ENCODE measurements at regions of chr5 and their contacts with region 1.

Region 1: GRCh38 chr5:172714491-172715421 is 56.2 kb downstream of the DUSP1 start:
- DNase-seq: peak; percentile 99
- H3K4me3 Mint-ChIP-seq: no peak overlapping the region
- H3K27ac Mint-ChIP-seq: peak overlapping the region; percentile 80
- H3K4me1 Mint-ChIP-seq: peaks cover 40% of the 10 kb centered on the region
- H3K27me3 Mint-ChIP-seq: no peaks in the 10 kb centered on the region
- CTCF ChIP-seq: peak; percentile 97

Region 2: GRCh38 chr5:172274921-172275753 is 439.6 kb before region 1 on chr5:
- CTCF ChIA-PET with region 1: no interaction called
- POLR2A ChIA-PET with region 1: no interaction called
- intact Hi-C with region 1: no loop called
- DNase-seq: peak; percentile 74
- H3K4me3 Mint-ChIP-seq: peak overlapping the region; percentile 0
- H3K27ac Mint-ChIP-seq: peak overlapping the region; percentile 58
- H3K4me1 Mint-ChIP-seq: peaks cover 26% of the 10 kb centered on the region
- H3K27me3 Mint-ChIP-seq: no peaks in the 10 kb centered on the region
- CTCF ChIP-seq: no peak

Region 3: DNA sequence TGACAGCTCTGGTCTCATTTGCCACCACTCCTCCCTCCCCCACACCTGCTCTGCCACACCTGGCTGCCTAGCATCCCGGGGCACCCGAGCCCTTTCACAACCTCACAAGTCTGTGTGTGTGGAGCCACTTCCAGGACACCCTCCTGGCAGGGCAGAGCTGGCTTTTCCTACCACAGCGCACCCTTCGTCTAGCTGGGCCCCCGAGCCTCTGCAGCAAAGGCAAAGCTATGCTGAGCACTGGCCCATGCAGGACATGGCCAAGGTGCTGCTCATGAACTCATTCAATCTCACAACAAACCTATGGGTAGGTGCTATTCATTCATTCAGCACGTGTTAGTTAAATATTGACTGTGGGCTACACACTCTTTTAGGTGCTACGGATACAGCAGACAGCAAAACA is 12.8 kb after region 1 on chr5:
- CTCF ChIA-PET with region 1: interaction called, 51 read pairs
- POLR2A ChIA-PET with region 1: interaction called, 17 read pairs
- intact Hi-C with region 1: no loop called
- DNase-seq: no peak
- H3K4me3 Mint-ChIP-seq: no peak overlapping the region
- H3K27ac Mint-ChIP-seq: peak overlapping the region; percentile 61
- H3K4me1 Mint-ChIP-seq: peaks cover 19% of the 10 kb centered on the region
- H3K27me3 Mint-ChIP-seq: no peaks in the 10 kb centered on the region
- CTCF ChIP-seq: no peak

Region 4: GRCh38 chr5:172777881-172778814 is 63.4 kb after region 1 on chr5:
- CTCF ChIA-PET with region 1: interaction called, 66 read pairs
- POLR2A ChIA-PET with region 1: interaction called, 53 read pairs
- intact Hi-C with region 1: no loop called
- DNase-seq: peak; percentile 97
- H3K4me3 Mint-ChIP-seq: peak overlapping the region; percentile 69
- H3K27ac Mint-ChIP-seq: peak overlapping the region; percentile 99
- H3K4me1 Mint-ChIP-seq: peaks cover 70% of the 10 kb centered on the region
- H3K27me3 Mint-ChIP-seq: no peaks in the 10 kb centered on the region
- CTCF ChIP-seq: no peak

Region 5: DNA sequence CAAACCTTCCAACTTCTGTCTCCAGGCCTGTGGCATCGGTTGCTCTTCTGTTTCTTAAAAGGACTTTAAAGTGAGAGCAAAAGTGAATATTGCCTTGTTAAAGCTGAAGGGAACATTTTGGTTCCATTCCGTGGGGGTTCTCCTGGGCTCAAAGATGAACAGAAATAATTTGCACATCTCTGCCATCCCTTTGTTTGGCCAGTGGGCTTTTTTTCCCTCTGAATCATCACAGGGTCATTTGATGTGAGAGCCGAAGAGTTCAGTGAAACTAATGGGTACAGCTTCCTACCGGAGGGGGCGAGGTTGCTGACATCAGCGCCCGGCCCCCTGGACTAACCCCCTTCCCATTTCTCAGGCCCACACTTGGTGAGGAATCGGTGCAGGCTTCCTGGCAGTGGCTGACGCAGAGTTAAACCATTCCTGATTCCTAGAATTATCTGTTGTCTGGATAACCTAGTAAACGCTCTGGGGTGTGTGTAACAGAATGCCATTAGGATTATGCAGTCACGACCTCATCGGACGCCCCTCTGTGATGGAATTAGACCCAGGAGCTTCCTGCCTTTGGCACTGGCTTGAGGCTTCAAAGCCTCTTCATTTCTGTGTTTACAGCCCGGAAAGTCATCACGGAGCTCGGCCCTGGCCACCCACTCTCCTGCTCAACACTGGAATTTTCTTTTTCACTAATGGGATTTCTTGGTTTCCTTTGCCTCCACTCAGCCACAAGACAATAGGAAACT is 182.9 kb after region 1 on chr5:
- CTCF ChIA-PET with region 1: interaction called, 22 read pairs
- POLR2A ChIA-PET with region 1: interaction called, 10 read pairs
- intact Hi-C with region 1: no loop called
- DNase-seq: peak; percentile 63
- H3K4me3 Mint-ChIP-seq: no peak overlapping the region
- H3K27ac Mint-ChIP-seq: peak overlapping the region; percentile 98
- H3K4me1 Mint-ChIP-seq: peaks cover 70% of the 10 kb centered on the region
- H3K27me3 Mint-ChIP-seq: no peaks in the 10 kb centered on the region
- CTCF ChIP-seq: no peak

Region 6: DNA sequence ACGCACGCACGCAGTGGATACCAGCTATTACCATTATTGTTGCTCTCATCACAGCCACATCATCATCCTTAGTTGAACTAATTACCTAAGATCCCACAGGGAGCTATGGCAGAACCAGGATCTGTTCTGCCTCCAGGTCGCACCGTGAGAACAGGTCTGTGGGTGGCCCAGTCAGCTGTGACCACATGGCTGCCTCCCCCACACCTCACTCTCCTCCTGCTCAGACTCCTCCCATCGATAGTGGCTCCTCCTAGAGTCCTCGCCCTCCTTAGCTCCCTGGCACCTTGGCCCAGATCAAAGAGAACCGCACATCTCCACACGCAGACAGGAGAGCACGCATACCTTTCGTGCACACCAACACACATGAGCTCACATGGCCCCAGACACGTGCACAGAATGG is 212.0 kb after region 1 on chr5:
- CTCF ChIA-PET with region 1: interaction called, 604 read pairs
- POLR2A ChIA-PET with region 1: interaction called, 21 read pairs
- intact Hi-C with region 1: no loop called
- DNase-seq: no peak
- H3K4me3 Mint-ChIP-seq: no peak overlapping the region
- H3K27ac Mint-ChIP-seq: peak overlapping the region; percentile 41
- H3K4me1 Mint-ChIP-seq: peaks cover 19% of the 10 kb centered on the region
- H3K27me3 Mint-ChIP-seq: no peaks in the 10 kb centered on the region
- CTCF ChIP-seq: no peak

Region 7: DNA sequence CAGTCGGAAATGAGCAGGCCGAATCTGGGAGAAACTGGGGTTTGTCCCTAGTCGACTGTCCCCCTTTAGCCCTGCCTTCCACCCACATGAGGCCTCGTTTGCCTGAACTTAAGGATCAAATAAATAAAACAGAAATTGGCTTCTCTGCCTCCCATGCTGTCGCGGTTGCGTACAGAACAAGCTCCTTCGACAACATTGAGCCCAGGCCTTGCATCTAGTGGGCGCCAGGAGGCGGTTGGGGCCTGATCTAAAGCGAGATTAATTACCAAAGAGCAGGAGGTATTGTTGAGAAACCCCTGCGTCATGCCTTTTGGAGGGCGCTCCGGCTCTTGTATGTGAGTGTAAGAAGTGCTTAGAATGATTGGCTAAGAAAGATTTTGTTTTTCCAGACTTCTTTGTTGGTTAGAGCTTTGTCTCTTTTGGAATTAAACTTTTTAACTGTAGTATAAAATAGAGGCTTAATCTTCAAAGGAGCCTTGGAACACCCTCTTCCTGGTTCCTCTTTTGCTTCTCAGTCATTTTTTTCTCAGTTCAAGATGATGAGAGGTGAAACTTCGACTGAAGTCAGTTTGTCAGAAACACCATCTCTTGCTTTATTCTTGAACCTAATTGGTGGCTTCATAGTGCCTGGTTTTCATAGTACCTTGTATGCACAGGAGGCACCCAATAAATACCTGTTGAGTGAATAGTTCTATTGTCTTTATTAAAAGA is 269.6 kb after region 1 on chr5:
- CTCF ChIA-PET with region 1: interaction called, 7 read pairs
- POLR2A ChIA-PET with region 1: interaction called, 12 read pairs
- intact Hi-C with region 1: no loop called
- DNase-seq: peak; percentile 96
- H3K4me3 Mint-ChIP-seq: peak overlapping the region; percentile 94
- H3K27ac Mint-ChIP-seq: peak overlapping the region; percentile 91
- H3K4me1 Mint-ChIP-seq: peaks cover 6% of the 10 kb centered on the region
- H3K27me3 Mint-ChIP-seq: no peaks in the 10 kb centered on the region
- CTCF ChIP-seq: peak; percentile 43

Measured in MCF 10A (cell line).